Panc1 (cell line): ENCODE measurements at regions of chr3 and their contacts with region 1.

Region 1: DNA sequence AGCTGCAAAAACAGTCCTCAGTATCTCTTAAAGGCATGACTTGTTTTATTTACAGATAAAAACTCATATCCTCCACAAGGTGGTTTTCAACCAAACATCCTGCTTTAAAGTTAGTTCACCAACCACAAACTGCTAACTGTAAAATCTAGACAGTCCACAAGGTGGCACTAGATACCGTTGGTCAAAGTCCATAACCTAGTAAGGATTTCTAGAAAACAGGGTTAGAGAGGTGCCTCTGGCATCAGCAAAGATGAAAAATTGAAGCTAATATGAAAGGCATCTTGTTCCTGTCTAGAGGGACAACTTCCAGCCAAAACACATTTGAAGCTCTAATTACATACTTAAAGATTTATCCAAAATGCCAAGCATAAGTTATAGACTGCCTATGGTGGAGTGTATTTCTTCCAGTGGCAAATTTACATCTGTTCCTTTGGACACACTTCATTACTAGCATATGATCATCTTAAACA is 56.0 kb downstream of the ZMAT3 start:
- DNase-seq: peak; percentile 76
- ATAC-seq: peak; percentile 95
- H3K4me3 ChIP-seq: no peak overlapping the region
- H3K27ac ChIP-seq: no peak overlapping the region
- H3K4me1 ChIP-seq: peaks cover 3% of the 10 kb centered on the region; the same call in 1 of the 2 replicates
- H3K27me3 ChIP-seq: no peaks in the 10 kb centered on the region
- CTCF ChIP-seq: peak; percentile 81; the same call in 1 of the 2 replicates

Region 2: DNA sequence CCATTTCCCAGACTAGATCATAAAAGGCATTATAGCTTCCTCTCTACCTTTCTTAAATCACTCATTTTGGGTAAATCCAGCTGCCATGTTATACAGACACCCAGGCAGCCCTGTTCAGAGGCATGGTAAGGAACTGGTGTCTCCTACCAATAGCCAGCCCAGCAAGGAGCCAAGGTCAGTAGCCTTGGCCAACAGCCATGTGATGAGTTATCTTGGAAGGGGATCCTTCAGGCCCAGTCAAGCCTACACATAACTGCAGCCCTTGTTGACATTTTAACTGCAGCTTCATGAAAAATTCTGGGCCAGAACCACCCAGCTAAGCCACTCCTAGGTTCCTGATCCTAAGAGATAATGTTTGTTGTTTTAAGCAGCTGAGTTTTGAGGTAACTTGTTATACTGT is 85.1 kb after region 1 on chr3:
- CTCF ChIA-PET with region 1: no interaction called
- POLR2A ChIA-PET with region 1: no interaction called
- in situ Hi-C with region 1: no loop called
- intact Hi-C with region 1: loop called (anchors 10 kb)
- DNase-seq: no peak
- ATAC-seq: no peak
- H3K4me3 ChIP-seq: no peak overlapping the region
- H3K27ac ChIP-seq: no peak overlapping the region
- H3K4me1 ChIP-seq: no peaks in the 10 kb centered on the region
- H3K27me3 ChIP-seq: no peaks in the 10 kb centered on the region; the same call in 1 of the 2 replicates
- CTCF ChIP-seq: no peak

Region 3: GRCh38 chr3:179147873-179148615 is 132.5 kb after region 1 on chr3 and contains the start of gene PIK3CA:
- CTCF ChIA-PET with region 1: no interaction called
- POLR2A ChIA-PET with region 1: no interaction called
- in situ Hi-C with region 1: no loop called
- intact Hi-C with region 1: loop called (anchors 5 kb)
- DNase-seq: peak; percentile 95
- ATAC-seq: peak; percentile 91
- H3K4me3 ChIP-seq: peak within 1 kb of the TSS; percentile 89 to 97
- H3K27ac ChIP-seq: peak within 1 kb of the TSS; percentile 91
- H3K4me1 ChIP-seq: peaks cover 24% of the 10 kb centered on the region
- H3K27me3 ChIP-seq: no peaks in the 10 kb centered on the region
- CTCF ChIP-seq: no peak
- total RNA-seq, gene PIK3CA: 27.6 TPM

Region 4: GRCh38 chr3:179322286-179323196 is 307.0 kb after region 1 on chr3 and contains the start of gene ZNF639:
- CTCF ChIA-PET with region 1: no interaction called
- POLR2A ChIA-PET with region 1: no interaction called
- in situ Hi-C with region 1: no loop called
- intact Hi-C with region 1: loop called (anchors 2 kb)
- DNase-seq: peak; percentile 33
- ATAC-seq: peak; percentile 95
- H3K4me3 ChIP-seq: peak within 1 kb of the TSS; percentile 87 to 89
- H3K27ac ChIP-seq: peak within 1 kb of the TSS; percentile 95
- H3K4me1 ChIP-seq: peaks cover 20% of the 10 kb centered on the region
- H3K27me3 ChIP-seq: no peaks in the 10 kb centered on the region
- CTCF ChIP-seq: peak; percentile 96
- total RNA-seq, gene ZNF639: 56.1 TPM